CD8-positive, alpha-beta T cell (primary cell): ENCODE measurements at regions of chr17 and their contacts with region 1.

Region 1: DNA sequence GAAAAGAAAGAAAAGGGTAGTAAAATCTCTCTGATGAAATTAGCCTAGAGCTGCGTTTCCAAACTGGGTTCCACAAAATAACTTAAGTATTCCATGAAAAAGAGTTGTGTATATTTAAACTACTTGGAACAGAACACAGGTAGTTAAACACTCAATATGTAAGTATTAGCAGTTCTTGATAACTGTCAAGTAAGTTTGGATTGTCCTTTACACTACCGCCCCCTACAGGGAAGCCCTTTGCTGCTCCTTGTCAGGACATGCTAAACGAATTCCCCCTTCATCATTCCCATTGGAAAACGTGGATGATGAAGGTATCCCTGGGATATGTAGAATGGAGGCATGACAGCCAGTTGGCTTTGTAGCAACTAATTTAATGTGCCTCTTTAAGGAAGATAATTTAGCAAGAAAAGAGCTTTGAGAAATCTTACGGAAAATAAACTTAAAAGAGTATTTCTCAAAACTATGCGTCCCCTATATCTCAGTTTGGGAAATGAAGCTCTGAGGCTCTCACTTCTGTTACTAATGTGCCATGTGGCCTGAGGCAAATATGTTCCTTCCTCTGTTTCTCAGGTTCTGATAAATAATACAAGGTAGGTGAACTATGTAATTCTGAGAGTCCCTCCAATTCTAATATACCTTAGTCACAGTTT is 18.8 kb downstream of the NCBP3 start:
- DNase-seq: peak; percentile 50 to 85 (median 79)
- ATAC-seq: peak; percentile 80
- H3K4me3 ChIP-seq: no peak overlapping the region
- H3K4me3 Mint-ChIP-seq: no peak overlapping the region
- H3K27ac ChIP-seq: no peak overlapping the region
- H3K27ac Mint-ChIP-seq: no peak overlapping the region
- H3K4me1 ChIP-seq: no peaks in the 10 kb centered on the region
- H3K4me1 Mint-ChIP-seq: peaks cover 2% of the 10 kb centered on the region
- H3K27me3 ChIP-seq: no peaks in the 10 kb centered on the region
- H3K27me3 Mint-ChIP-seq: no peaks in the 10 kb centered on the region
- CTCF ChIP-seq: peak; percentile 96

Region 2: DNA sequence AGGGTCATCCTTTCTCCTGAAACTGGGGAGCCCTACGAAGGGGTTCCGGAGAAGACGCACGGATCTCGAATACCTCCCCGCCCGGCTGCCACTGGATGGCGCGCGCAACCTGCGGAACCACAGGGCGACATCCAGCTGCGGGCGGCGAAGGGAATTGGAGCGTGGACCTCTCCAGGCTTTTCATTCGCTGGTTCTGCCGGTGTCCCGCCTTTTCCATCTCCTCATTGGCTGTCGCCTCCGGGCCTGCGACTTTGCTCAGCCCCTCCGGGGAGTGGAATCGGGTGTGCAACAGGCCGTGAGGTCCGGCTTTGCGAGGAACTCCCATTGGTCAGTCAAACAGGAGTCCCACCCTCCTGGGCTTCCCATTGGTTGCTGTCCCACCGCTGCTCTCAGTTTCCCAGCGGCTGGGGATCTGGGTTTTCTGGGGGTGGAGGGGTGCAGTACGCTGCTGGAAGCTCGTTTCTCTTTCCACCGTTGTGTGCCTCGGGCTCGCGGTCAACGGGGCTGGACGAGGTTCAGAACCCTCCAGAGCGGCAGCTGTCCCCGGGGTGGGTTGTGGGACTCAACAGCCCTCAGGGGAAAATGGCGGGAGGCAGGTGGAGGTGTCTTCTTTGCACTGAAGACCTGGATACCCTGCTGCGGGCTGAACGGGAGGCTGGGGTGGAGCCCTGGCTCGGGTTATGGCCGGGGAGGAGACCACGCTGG is 778.3 kb before region 1 on chr17:
- CTCF ChIA-PET with region 1: no interaction called
- POLR2A ChIA-PET with region 1: no interaction called
- intact Hi-C with region 1: loop called in 1 of 2 experiments (anchors 5 kb)
- DNase-seq: peak; percentile 81 to 97 (median 90)
- ATAC-seq: peak; percentile 96
- H3K4me3 ChIP-seq: peak overlapping the region; percentile 67 to 91
- H3K4me3 Mint-ChIP-seq: peak overlapping the region; percentile 87
- H3K27ac ChIP-seq: peak overlapping the region; percentile 27 to 45
- H3K27ac Mint-ChIP-seq: peak overlapping the region; percentile 55
- H3K4me1 ChIP-seq: no peaks in the 10 kb centered on the region
- H3K4me1 Mint-ChIP-seq: peaks cover 6% of the 10 kb centered on the region
- H3K27me3 ChIP-seq: no peaks in the 10 kb centered on the region
- H3K27me3 Mint-ChIP-seq: no peaks in the 10 kb centered on the region
- CTCF ChIP-seq: peak; percentile 56

Region 3: GRCh38 chr17:3683054-3683511 is 144.2 kb before region 1 on chr17:
- CTCF ChIA-PET with region 1: interaction called, 13 read pairs
- POLR2A ChIA-PET with region 1: no interaction called
- intact Hi-C with region 1: loop called (anchors 2 kb)
- DNase-seq: peak; percentile 27 to 80 (median 65)
- ATAC-seq: peak; percentile 99
- H3K4me3 ChIP-seq: no peak overlapping the region
- H3K4me3 Mint-ChIP-seq: no peak overlapping the region
- H3K27ac ChIP-seq: no peak overlapping the region
- H3K27ac Mint-ChIP-seq: no peak overlapping the region
- H3K4me1 ChIP-seq: no peaks in the 10 kb centered on the region
- H3K4me1 Mint-ChIP-seq: peaks cover 8% of the 10 kb centered on the region
- H3K27me3 ChIP-seq: no peaks in the 10 kb centered on the region
- H3K27me3 Mint-ChIP-seq: no peaks in the 10 kb centered on the region
- CTCF ChIP-seq: peak; percentile 78

Region 4: GRCh38 chr17:3762922-3763776 is 64.1 kb before region 1 on chr17:
- CTCF ChIA-PET with region 1: interaction called, 8 read pairs
- POLR2A ChIA-PET with region 1: no interaction called
- intact Hi-C with region 1: loop called in 1 of 2 experiments (anchors 1 kb)
- DNase-seq: peak in 4 of 9 experiments; percentile 44 to 88 (median 75)
- ATAC-seq: peak; percentile 30
- H3K4me3 ChIP-seq: peak overlapping the region; percentile 16 to 45
- H3K4me3 Mint-ChIP-seq: peak overlapping the region; percentile 82
- H3K27ac ChIP-seq: peak overlapping the region; percentile 42 to 70
- H3K27ac Mint-ChIP-seq: peak overlapping the region; percentile 97
- H3K4me1 ChIP-seq: peaks cover 52% of the 10 kb centered on the region
- H3K4me1 Mint-ChIP-seq: peaks cover 50% of the 10 kb centered on the region
- H3K27me3 ChIP-seq: no peaks in the 10 kb centered on the region
- H3K27me3 Mint-ChIP-seq: no peaks in the 10 kb centered on the region
- CTCF ChIP-seq: no peak

Region 5: GRCh38 chr17:3770466-3770865 is 56.8 kb before region 1 on chr17:
- CTCF ChIA-PET with region 1: interaction called, 12 read pairs
- POLR2A ChIA-PET with region 1: no interaction called
- intact Hi-C with region 1: loop called in 1 of 2 experiments (anchors 1 kb)
- DNase-seq: peak; percentile 30 to 88 (median 73)
- ATAC-seq: peak; percentile 73
- H3K4me3 ChIP-seq: no peak overlapping the region
- H3K4me3 Mint-ChIP-seq: peak overlapping the region; percentile 68
- H3K27ac ChIP-seq: peak overlapping the region; percentile 57 to 61
- H3K27ac Mint-ChIP-seq: peak overlapping the region; percentile 95
- H3K4me1 ChIP-seq: peaks cover 66% of the 10 kb centered on the region
- H3K4me1 Mint-ChIP-seq: peaks cover 64% of the 10 kb centered on the region
- H3K27me3 ChIP-seq: no peaks in the 10 kb centered on the region
- H3K27me3 Mint-ChIP-seq: no peaks in the 10 kb centered on the region
- CTCF ChIP-seq: no peak

Region 6: GRCh38 chr17:3796110-3796821 is 31.0 kb before region 1 on chr17:
- CTCF ChIA-PET with region 1: interaction called, 9 read pairs
- POLR2A ChIA-PET with region 1: no interaction called
- intact Hi-C with region 1: loop called in 1 of 2 experiments (anchors 2 kb)
- DNase-seq: peak; percentile 74 to 96 (median 85)
- ATAC-seq: peak; percentile 67
- H3K4me3 ChIP-seq: no peak overlapping the region
- H3K4me3 Mint-ChIP-seq: peak overlapping the region; percentile 9
- H3K27ac ChIP-seq: peak overlapping the region; percentile 29 to 36
- H3K27ac Mint-ChIP-seq: peak overlapping the region; percentile 97
- H3K4me1 ChIP-seq: peaks cover 23% of the 10 kb centered on the region
- H3K4me1 Mint-ChIP-seq: peaks cover 52% of the 10 kb centered on the region
- H3K27me3 ChIP-seq: no peaks in the 10 kb centered on the region
- H3K27me3 Mint-ChIP-seq: no peaks in the 10 kb centered on the region
- CTCF ChIP-seq: no peak